Caco-2 (cell line): ENCODE measurements at regions of chr2 and their contacts with region 1.

Region 1: DNA sequence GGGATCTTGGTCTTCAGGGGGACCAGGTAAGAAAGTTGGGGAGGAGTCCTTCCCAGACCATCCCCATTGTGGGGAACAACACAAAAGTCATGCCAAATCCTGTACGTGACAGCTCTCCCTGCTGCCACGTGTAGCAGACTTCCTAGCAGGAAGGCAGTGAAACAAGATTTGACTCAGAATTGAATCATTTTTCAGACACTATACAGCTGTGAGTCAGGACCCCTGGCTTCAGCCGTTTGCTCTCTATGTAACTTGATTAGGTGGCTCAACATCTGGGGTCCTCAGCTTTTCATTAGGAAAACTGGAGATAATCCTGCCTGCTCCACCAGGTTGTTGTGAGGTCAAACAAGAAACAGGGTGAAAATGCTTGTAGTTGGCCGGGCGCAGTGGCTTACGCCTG is 32.9 kb upstream of the PDCL3 start:
- DNase-seq: no peak
- H3K4me3 ChIP-seq: no peak overlapping the region
- H3K4me3 Mint-ChIP-seq: no peak overlapping the region
- H3K27ac Mint-ChIP-seq: no peak overlapping the region
- H3K4me1 ChIP-seq: no peaks in the 10 kb centered on the region
- H3K4me1 Mint-ChIP-seq: no peaks in the 10 kb centered on the region
- H3K27me3 ChIP-seq: no peaks in the 10 kb centered on the region; the same call in 1 of the 2 replicates
- H3K27me3 Mint-ChIP-seq: peaks cover 4% of the 10 kb centered on the region
- CTCF ChIP-seq: no peak

Region 2: GRCh38 chr2:101432411-101433181 is 902.7 kb after region 1 on chr2:
- CTCF ChIA-PET with region 1: no interaction called
- POLR2A ChIA-PET with region 1: interaction called, 10 read pairs
- intact Hi-C with region 1: no loop called
- DNase-seq: no peak
- H3K4me3 ChIP-seq: no peak overlapping the region
- H3K4me3 Mint-ChIP-seq: no peak overlapping the region
- H3K27ac Mint-ChIP-seq: no peak overlapping the region
- H3K4me1 ChIP-seq: no peaks in the 10 kb centered on the region
- H3K4me1 Mint-ChIP-seq: no peaks in the 10 kb centered on the region
- H3K27me3 ChIP-seq: no peaks in the 10 kb centered on the region
- H3K27me3 Mint-ChIP-seq: no peaks in the 10 kb centered on the region
- CTCF ChIP-seq: no peak